ENCODE measurements at regions of chr16 and their contacts with region 1.

Region 1: DNA sequence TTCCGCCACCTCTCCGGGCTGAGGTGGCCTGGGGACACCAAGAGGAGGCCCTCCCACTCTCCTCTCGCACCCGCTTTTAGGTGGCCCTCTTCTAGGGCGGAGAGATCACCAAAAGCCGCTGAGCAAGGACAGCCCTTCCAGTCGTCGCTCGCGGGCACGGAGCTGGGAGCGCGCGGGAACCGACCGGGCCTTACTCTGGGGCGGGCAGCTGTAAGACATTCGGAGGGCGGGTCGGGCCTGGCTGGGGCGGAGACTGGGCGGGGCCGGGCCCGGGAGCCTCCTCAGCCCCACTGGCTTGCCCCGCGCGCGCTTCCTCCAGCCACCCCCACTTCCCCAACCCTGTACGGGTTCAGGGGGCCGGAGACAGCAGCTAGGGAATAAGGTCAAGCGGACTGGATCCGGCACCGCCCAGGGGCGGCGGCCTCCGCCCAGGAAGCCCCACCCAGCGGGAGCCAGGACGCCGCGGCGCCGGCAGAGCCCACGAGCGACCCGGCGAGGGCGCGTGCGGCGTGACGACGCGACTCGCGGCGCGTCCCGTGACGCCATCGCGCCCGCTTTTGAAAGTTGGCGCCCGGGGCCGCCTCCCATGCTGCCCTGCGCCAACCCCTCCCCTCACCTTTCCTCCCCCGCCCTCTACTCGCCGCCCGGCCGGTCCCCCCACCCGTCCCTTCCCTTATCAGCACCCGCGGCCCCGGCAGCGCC is 351 bp upstream of the CTCF start:
- DNase-seq: peak; percentile 98

Region 2: GRCh38 chr16:67480833-67481560 is 81.0 kb before region 1 on chr16 and contains the start of gene ATP6V0D1:
- intact Hi-C with region 1: loop called (anchors 5 kb)
- DNase-seq: peak; percentile 99
- total RNA-seq, gene ATP6V0D1: 58.8 TPM

Region 3: DNA sequence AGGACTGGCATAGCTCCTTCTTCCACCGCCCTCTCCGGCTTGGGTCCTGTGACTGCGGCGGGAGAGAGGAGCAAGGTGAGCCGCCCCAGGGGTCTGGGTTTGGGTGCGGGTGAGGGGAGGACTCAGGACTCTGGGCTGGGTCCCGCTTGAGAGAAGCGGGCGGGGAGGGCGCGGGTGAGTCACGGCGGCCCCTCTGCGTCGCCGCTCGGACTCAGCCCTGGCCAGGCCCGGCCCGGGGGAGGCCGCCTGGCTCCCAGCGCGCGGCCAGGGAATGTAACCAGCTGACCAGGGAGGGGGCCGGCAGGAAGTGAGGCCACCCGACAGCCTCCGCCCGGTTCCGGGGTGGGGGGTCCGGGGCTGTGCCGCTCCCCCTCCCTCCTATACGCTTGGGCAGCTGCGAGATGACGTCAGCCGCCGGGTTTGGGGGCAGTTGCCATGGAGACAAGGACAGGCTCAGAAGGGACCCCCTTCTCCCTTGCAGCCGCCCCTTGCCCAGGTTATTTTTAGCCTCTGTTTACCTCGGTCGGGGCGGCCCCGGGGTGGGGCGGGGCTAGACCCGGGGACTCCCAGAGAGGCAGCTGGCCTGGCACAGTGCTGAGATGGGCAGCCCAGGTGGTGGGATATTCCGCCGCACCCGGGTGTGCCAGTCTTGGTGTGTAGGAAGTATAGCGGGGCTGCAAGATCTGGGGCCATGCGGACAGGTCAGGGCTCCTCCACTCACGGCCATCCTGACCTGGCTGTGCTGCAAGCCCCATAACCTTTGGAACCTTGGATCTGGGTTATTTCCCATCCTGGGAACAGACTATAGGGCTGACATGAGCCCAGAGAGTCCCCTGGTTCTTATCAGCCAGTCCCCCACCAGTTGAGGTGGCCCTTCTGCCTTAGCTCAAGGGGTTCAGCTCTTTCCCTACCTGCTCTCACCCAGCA is 31.7 kb before region 1 on chr16:
- intact Hi-C with region 1: loop called (anchors 2 kb)
- DNase-seq: peak; percentile 90

Region 4: DNA sequence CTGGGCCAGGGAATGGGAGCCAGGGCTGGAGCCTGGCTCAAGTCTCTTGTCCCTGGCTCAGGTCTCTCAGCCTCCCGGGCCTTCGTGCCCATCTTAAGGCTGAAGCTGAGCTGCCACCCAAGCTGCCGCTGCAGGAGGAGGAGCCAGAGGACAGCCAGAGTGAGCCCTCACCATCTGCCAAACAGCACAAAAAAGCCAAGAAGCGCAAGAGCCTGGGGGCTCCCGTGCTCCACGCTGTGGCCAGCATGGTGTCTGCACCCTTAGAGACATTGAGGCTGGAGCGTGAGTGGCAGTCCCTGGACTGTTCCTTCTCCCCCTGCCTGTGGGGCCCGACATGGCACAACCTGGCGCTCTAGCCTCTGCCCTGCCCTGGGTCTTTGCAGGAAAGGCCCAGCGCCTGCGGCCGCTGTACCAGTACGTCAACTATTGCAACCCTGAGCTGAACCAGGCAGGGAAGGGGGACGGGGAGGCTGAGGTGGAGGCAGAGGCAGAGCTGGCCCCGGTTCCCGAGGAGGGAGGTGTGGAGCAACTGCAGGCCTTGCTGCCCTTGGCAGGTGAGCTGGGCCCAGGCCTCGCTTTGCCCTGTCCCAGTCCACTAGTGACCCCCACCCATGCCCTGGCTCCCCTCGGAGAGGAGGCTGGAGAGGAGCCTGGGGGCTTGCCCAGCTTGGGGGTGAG is 106.0 kb after region 1 on chr16:
- intact Hi-C with region 1: loop called (anchors 1 kb)
- DNase-seq: peak; percentile 90

Region 5: DNA sequence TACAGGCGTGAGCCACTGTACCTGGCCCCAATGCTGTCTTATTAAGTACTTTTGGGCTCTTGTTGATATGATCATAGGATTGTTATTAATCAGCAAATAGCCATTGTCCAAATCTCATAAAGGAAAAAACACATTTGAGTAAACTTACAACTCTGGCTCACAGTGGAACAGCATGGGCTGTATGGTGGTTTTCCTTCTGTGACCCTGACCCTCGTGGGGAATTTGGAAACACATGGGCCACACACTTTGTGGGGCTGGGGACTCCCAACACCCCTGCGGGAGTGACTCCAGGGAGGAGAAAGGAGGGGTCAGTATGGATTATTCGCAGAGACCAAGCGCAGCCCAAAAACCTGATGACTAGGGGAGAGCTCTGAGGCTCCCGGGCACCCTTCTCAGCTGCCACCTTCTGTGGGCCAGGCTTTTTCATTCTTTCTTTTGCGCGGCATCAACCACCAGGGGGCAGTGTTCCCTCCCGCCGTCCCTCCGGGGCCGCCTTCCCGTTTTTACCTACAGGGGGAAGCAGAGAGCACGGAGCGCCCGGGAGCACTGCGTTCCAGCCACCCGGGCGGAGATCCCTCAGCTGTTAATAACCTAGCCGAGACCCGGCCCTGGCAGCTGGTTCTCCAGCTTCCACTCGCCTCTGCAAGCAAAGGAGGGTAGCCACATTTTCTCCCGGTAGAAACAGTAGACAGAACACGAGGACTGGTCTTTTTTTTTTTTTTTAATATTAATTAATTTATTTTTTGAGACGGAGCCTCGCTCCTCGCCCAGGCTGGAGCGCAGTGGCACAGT is 254.5 kb after region 1 on chr16:
- intact Hi-C with region 1: no loop called
- DNase-seq: peak; percentile 96

Measured in cardiac septum (tissue), 1 donor.